Breast epithelium (tissue), 4 donors: ENCODE measurements at regions of chr4 and their contacts with region 1.

Region 1: DNA sequence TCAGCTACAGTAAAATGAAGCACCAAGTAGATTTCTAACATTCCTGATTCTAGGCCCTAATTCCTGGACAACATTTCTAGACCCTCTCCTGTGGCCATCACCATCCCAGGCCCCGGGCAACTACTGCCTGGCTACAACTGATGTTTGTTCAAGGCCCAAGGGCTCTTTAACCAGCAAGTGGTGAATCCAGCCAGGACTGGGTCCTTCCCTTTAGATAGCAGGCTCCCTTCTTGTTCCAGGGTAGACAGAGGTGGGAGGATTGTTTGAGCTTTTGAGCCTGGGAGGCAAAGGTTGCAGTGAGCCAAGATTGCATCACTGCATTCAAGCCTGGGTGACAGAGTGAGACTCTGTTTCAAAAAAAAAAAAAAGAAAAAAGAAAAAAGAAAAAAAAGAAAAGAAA is 12.7 kb upstream of the AADAT start:
- DNase-seq: no peak
- H3K4me3 ChIP-seq: no peak overlapping the region
- H3K27ac ChIP-seq: no peak overlapping the region
- H3K4me1 ChIP-seq: no peaks in the 10 kb centered on the region
- H3K27me3 ChIP-seq: no peaks in the 10 kb centered on the region
- CTCF ChIP-seq: no peak
- POLR2A ChIP-seq: no peak

Region 2: DNA sequence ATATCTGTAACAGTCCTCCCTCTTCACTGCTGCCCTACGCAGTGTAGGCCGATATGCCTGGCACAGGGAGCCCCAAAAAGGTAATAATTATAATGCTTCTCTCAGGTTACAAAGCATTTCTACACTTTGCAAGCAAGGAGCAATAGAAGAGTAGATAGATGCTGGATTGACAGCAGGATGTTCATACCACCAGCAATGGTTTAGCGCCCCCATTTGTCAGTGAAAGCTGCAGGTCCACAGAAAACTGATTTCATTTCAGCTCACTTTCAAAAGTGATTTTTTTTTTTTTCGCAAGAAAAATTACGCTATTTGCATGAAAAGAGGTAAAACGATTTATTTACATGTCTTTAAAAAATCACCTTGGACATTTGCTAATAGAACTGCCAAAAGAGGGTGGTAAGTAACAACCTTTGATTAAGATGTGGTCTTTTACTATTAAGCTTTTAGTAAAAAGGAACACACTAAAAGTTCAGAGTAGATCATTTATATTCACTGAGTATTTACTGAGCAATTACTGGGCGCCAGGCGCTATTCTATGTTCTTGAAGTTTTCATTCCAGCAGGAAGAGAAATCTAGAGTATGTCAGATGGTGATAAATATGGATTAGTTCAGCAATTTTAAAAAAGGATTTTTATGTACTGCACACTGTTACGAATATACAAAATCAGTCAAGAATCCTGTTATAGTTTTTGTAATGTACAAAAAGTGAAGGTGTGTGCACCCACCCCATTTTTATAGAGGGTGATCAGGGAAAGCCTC is 379.0 kb before region 1 on chr4:
- intact Hi-C with region 1: no loop called
- DNase-seq: no peak
- H3K4me3 ChIP-seq: no peak overlapping the region
- H3K27ac ChIP-seq: no peak overlapping the region
- H3K4me1 ChIP-seq: no peaks in the 10 kb centered on the region
- H3K27me3 ChIP-seq: no peaks in the 10 kb centered on the region
- CTCF ChIP-seq: no peak
- POLR2A ChIP-seq: no peak

Region 3: GRCh38 chr4:169988252-169988651 is 114.2 kb before region 1 on chr4:
- intact Hi-C with region 1: loop called (anchors 5 kb)
- DNase-seq: no peak
- H3K4me3 ChIP-seq: no peak overlapping the region
- H3K27ac ChIP-seq: no peak overlapping the region
- H3K4me1 ChIP-seq: no peaks in the 10 kb centered on the region
- H3K27me3 ChIP-seq: no peaks in the 10 kb centered on the region
- CTCF ChIP-seq: no peak
- POLR2A ChIP-seq: no peak